ENCODE measurements at regions of chr2 and their contacts with region 1.

Region 1: DNA sequence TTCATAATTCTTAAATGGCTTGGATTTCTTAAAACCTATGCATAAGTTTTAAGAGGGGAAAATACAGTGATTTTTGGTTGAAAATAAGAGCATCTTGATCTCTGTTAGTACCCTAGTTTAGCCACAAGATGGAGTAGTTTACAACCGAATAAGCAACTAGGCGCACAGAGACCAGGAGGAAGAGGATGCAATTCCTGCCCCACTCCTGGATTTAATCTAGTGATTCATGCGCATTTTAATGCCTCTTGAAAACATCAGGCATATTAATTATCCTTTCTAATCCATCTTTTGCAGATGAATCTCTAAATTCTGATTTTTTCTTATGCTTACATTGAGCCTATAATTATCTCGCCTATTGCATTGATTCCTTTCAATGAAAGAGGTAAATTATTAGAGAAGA is 76.7 kb downstream of the MRPS9 start:
- DNase-seq: no peak
- H3K4me3 ChIP-seq: no peak overlapping the region
- H3K27ac ChIP-seq: no peak overlapping the region
- H3K4me1 ChIP-seq: no peaks in the 10 kb centered on the region
- H3K27me3 ChIP-seq: no peaks in the 10 kb centered on the region
- CTCF ChIP-seq: peak in 2 of 3 experiments; percentile 51 to 57

Region 2: GRCh38 chr2:105239924-105240323 is 125.4 kb after region 1 on chr2:
- intact Hi-C with region 1: loop called (anchors 2 kb)
- DNase-seq: no peak
- H3K4me3 ChIP-seq: no peak overlapping the region
- H3K27ac ChIP-seq: no peak overlapping the region
- H3K4me1 ChIP-seq: no peaks in the 10 kb centered on the region
- H3K27me3 ChIP-seq: no peaks in the 10 kb centered on the region
- CTCF ChIP-seq: no peak